ENCODE measurements at regions of chr6 and their contacts with region 1.

Region 1: GRCh38 chr6:3068329-3069214 is at the start of gene RIPK1:
- DNase-seq: peak; percentile 87 to 97 (median 94)
- ATAC-seq: peak; percentile 73
- H3K4me3 ChIP-seq: peak within 1 kb of the TSS; percentile 84
- H3K4me3 Mint-ChIP-seq: peak within 1 kb of the TSS; percentile 99
- H3K27ac ChIP-seq: peak within 1 kb of the TSS; percentile 88 to 94
- H3K27ac Mint-ChIP-seq: peak within 1 kb of the TSS; percentile 99
- H3K4me1 ChIP-seq: peaks cover 44% of the 10 kb centered on the region
- H3K4me1 Mint-ChIP-seq: peaks cover 74% of the 10 kb centered on the region
- H3K27me3 ChIP-seq: no peaks in the 10 kb centered on the region
- H3K27me3 Mint-ChIP-seq: no peaks in the 10 kb centered on the region
- CTCF ChIP-seq: peak; percentile 40
- total RNA-seq, gene RIPK1: 17.2 to 17.3 TPM

Region 2: GRCh38 chr6:2791124-2791974 is 277.2 kb before region 1 on chr6:
- CTCF ChIA-PET with region 1: interaction called, 3 read pairs
- POLR2A ChIA-PET with region 1: no interaction called
- intact Hi-C with region 1: loop called in 1 of 2 experiments (anchors 5 kb)
- DNase-seq: peak; percentile 22 to 76 (median 42)
- ATAC-seq: peak; percentile 86
- H3K4me3 ChIP-seq: no peak overlapping the region
- H3K4me3 Mint-ChIP-seq: peak overlapping the region; percentile 49
- H3K27ac ChIP-seq: no peak overlapping the region
- H3K27ac Mint-ChIP-seq: peak overlapping the region; percentile 70
- H3K4me1 ChIP-seq: peaks cover 22% of the 10 kb centered on the region
- H3K4me1 Mint-ChIP-seq: peaks cover 37% of the 10 kb centered on the region
- H3K27me3 ChIP-seq: no peaks in the 10 kb centered on the region
- H3K27me3 Mint-ChIP-seq: no peaks in the 10 kb centered on the region
- CTCF ChIP-seq: peak; percentile 68

Region 3: GRCh38 chr6:2999618-3000557 is 68.7 kb before region 1 on chr6 and contains the start of gene NQO2:
- CTCF ChIA-PET with region 1: interaction called, 5 read pairs
- POLR2A ChIA-PET with region 1: interaction called, 16 read pairs
- intact Hi-C with region 1: loop called in 1 of 2 experiments (anchors 2 kb)
- DNase-seq: peak; percentile 82 to 96 (median 90)
- ATAC-seq: peak; percentile 69
- H3K4me3 ChIP-seq: peak within 1 kb of the TSS; percentile 93
- H3K4me3 Mint-ChIP-seq: peak within 1 kb of the TSS; percentile 93
- H3K27ac ChIP-seq: peak within 1 kb of the TSS; percentile 69 to 76
- H3K27ac Mint-ChIP-seq: peak within 1 kb of the TSS; percentile 93
- H3K4me1 ChIP-seq: peaks cover 32% of the 10 kb centered on the region
- H3K4me1 Mint-ChIP-seq: peaks cover 31% of the 10 kb centered on the region
- H3K27me3 ChIP-seq: no peaks in the 10 kb centered on the region
- H3K27me3 Mint-ChIP-seq: no peaks in the 10 kb centered on the region
- CTCF ChIP-seq: no peak
- total RNA-seq, gene NQO2: 6.7 to 7.7 TPM

Region 4: DNA sequence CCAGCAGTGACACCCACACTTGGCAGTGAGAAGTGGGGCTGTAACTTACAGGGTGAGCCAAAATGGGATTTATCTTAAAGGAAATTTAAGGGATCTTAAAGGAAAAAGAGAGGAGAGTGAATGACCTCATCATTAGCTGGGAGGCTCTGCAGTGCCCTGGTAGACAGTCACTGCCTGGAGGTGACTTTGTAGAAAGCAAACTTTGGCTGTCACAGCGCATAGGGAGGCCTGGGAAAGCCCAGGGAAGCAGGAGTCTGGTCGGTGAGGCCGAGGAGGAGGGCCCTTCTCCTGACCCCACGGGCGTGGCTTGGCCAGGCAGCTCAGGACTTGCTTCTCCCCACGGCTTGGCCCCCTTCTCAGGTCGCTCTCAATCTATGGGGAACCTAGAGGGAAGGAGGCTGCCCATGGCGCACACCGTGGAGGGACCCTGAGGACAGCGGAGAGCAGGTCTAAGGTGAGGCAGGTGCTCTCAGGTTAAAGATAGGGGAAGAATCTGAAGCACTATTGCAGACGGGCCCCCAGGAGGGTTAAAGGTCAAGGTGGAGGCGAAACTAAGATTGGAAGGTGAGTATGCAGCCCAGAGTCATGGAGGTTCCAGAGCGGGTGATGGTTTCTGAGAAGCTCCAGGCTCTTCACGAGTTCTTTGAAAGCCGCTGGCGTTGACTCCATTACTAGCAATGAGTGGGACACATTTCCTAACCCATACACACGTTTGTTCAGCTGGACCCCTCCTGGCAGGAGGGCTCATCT is 15.9 kb before region 1 on chr6:
- CTCF ChIA-PET with region 1: interaction called, 3 read pairs
- POLR2A ChIA-PET with region 1: interaction called, 12 read pairs
- intact Hi-C with region 1: no loop called
- DNase-seq: no peak
- ATAC-seq: no peak
- H3K4me3 ChIP-seq: peak overlapping the region; percentile 64
- H3K4me3 Mint-ChIP-seq: peak overlapping the region; percentile 79
- H3K27ac ChIP-seq: no peak overlapping the region
- H3K27ac Mint-ChIP-seq: peak overlapping the region; percentile 58
- H3K4me1 ChIP-seq: peaks cover 21% of the 10 kb centered on the region
- H3K4me1 Mint-ChIP-seq: peaks cover 23% of the 10 kb centered on the region
- H3K27me3 ChIP-seq: no peaks in the 10 kb centered on the region
- H3K27me3 Mint-ChIP-seq: no peaks in the 10 kb centered on the region
- CTCF ChIP-seq: no peak

Region 5: GRCh38 chr6:3162565-3163247 is 94.1 kb after region 1 on chr6:
- CTCF ChIA-PET with region 1: interaction called, 3 read pairs
- POLR2A ChIA-PET with region 1: interaction called, 4 read pairs
- intact Hi-C with region 1: loop called in 1 of 2 experiments (anchors 5 kb)
- DNase-seq: peak; percentile 22 to 83 (median 44)
- ATAC-seq: peak; percentile 54
- H3K4me3 ChIP-seq: peak overlapping the region; percentile 80
- H3K4me3 Mint-ChIP-seq: peak overlapping the region; percentile 85
- H3K27ac ChIP-seq: peak overlapping the region; percentile 35 to 60
- H3K27ac Mint-ChIP-seq: peak overlapping the region; percentile 87
- H3K4me1 ChIP-seq: peaks cover 46% of the 10 kb centered on the region
- H3K4me1 Mint-ChIP-seq: peaks cover 46% of the 10 kb centered on the region
- H3K27me3 ChIP-seq: no peaks in the 10 kb centered on the region
- H3K27me3 Mint-ChIP-seq: peaks cover 10% of the 10 kb centered on the region
- CTCF ChIP-seq: no peak

Region 6: GRCh38 chr6:3456755-3457466 is 388.3 kb after region 1 on chr6 and contains the start of gene SLC22A23:
- CTCF ChIA-PET with region 1: no interaction called
- POLR2A ChIA-PET with region 1: no interaction called
- intact Hi-C with region 1: no loop called
- DNase-seq: peak; percentile 63 to 91 (median 77)
- ATAC-seq: peak; percentile 52
- H3K4me3 ChIP-seq: peak within 1 kb of the TSS; percentile 72
- H3K4me3 Mint-ChIP-seq: peak within 1 kb of the TSS; percentile 89
- H3K27ac ChIP-seq: no peak within 1 kb of the TSS
- H3K27ac Mint-ChIP-seq: peak within 1 kb of the TSS; percentile 63
- H3K4me1 ChIP-seq: peaks cover 36% of the 10 kb centered on the region
- H3K4me1 Mint-ChIP-seq: peaks cover 7% of the 10 kb centered on the region
- H3K27me3 ChIP-seq: peaks cover 6 to 15% of the 10 kb centered on the region in 2 experiments
- H3K27me3 Mint-ChIP-seq: peaks cover 15% of the 10 kb centered on the region
- CTCF ChIP-seq: peak; percentile 79
- total RNA-seq, gene SLC22A23: 13.4 to 13.6 TPM

Measured in CD4-positive, alpha-beta T cell (primary cell).